ENCODE measurements at regions of chr2 and their contacts with region 1.

Region 1: GRCh38 chr2:189002079-189002478 is 27.9 kb downstream of the COL3A1 start:
- DNase-seq: no peak
- ATAC-seq: no peak

Region 2: GRCh38 chr2:188966079-188966571 is 36.0 kb before region 1 on chr2:
- intact Hi-C with region 1: no loop called
- DNase-seq: no peak
- ATAC-seq: no peak

Region 3: GRCh38 chr2:189049709-189050164 is 47.7 kb after region 1 on chr2:
- intact Hi-C with region 1: loop called in 1 of 2 experiments (anchors 10 kb)
- DNase-seq: no peak
- ATAC-seq: no peak

Measured in left colon (tissue), 2 donors.